Activated B cell treated with CpG ODN at 0.5 μM for 24 hours (primary cell): ENCODE measurements at regions of chr3 and their contacts with region 1.

Region 1: GRCh38 chr3:43690400-43691119 is at the start of gene ABHD5:
- DNase-seq: peak; percentile 92
- ATAC-seq: peak; percentile 82
- H3K4me3 Mint-ChIP-seq: peak within 1 kb of the TSS; percentile 88
- H3K27ac Mint-ChIP-seq: peak within 1 kb of the TSS; percentile 86
- H3K4me1 Mint-ChIP-seq: peaks cover 28% of the 10 kb centered on the region
- H3K27me3 Mint-ChIP-seq: no peaks in the 10 kb centered on the region
- CTCF ChIP-seq: no peak
- total RNA-seq, gene ABHD5: 6.0 and 8.0 TPM in 2 replicates

Region 2: DNA sequence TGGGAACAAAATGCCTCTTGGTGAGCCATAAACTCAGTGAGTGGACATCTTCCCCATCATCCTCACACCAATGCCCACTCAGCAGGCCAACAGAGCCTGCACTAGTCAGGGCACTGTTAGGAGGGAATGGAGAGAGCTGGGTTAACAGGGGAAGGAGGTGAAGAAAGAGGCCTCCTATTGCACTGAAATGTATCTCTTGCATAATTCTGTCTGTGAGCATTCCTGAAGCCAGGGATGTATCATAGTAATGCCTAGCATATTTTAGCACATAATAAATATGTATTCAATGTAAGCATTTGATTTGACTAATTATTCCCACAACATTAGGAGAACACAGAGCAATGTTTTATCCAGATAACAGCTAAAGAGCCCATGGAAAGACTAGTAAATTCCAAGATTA is 149.9 kb before region 1 on chr3:
- CTCF ChIA-PET with region 1: no interaction called
- POLR2A ChIA-PET with region 1: interaction called, 3 read pairs
- intact Hi-C with region 1: loop called (anchors 2 kb)
- DNase-seq: no peak
- ATAC-seq: no peak
- H3K4me3 Mint-ChIP-seq: no peak overlapping the region
- H3K27ac Mint-ChIP-seq: no peak overlapping the region
- H3K4me1 Mint-ChIP-seq: no peaks in the 10 kb centered on the region
- H3K27me3 Mint-ChIP-seq: no peaks in the 10 kb centered on the region
- CTCF ChIP-seq: no peak

Region 3: GRCh38 chr3:43606284-43606683 is 84.3 kb before region 1 on chr3:
- CTCF ChIA-PET with region 1: no interaction called
- POLR2A ChIA-PET with region 1: no interaction called
- intact Hi-C with region 1: no loop called
- DNase-seq: no peak
- ATAC-seq: no peak
- H3K4me3 Mint-ChIP-seq: no peak overlapping the region
- H3K27ac Mint-ChIP-seq: no peak overlapping the region
- H3K4me1 Mint-ChIP-seq: no peaks in the 10 kb centered on the region
- H3K27me3 Mint-ChIP-seq: no peaks in the 10 kb centered on the region
- CTCF ChIP-seq: no peak

Region 4: DNA sequence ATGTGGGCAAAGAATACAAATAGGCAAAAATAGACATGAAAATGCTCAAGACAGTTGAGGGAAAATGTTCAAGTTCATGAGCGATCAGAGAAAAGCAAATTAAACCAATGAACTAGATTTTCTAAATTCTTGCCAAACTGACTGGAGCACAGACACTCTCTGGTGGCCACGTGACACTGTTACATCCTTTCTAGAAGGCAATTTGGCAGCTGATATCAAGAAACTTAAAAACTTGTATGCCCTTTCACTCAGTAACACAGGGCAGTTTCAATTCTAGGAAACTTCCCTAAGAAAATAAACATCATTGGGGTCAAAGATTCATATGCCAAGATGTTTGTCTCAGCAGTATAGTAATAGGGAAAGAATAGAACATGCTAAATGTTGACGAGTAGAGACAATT is 52.4 kb after region 1 on chr3:
- CTCF ChIA-PET with region 1: no interaction called
- POLR2A ChIA-PET with region 1: no interaction called
- intact Hi-C with region 1: no loop called
- DNase-seq: no peak
- ATAC-seq: no peak
- H3K4me3 Mint-ChIP-seq: no peak overlapping the region
- H3K27ac Mint-ChIP-seq: no peak overlapping the region
- H3K4me1 Mint-ChIP-seq: no peaks in the 10 kb centered on the region
- H3K27me3 Mint-ChIP-seq: peaks cover 6% of the 10 kb centered on the region
- CTCF ChIP-seq: no peak

Region 5: GRCh38 chr3:43998836-43999727 is 308.5 kb after region 1 on chr3:
- CTCF ChIA-PET with region 1: no interaction called
- POLR2A ChIA-PET with region 1: interaction called, 3 read pairs
- intact Hi-C with region 1: loop called (anchors 2 kb)
- DNase-seq: peak; percentile 48
- ATAC-seq: peak; percentile 45
- H3K4me3 Mint-ChIP-seq: peak overlapping the region; percentile 89
- H3K27ac Mint-ChIP-seq: peak overlapping the region; percentile 66
- H3K4me1 Mint-ChIP-seq: peaks cover 46% of the 10 kb centered on the region
- H3K27me3 Mint-ChIP-seq: peaks cover 51% of the 10 kb centered on the region
- CTCF ChIP-seq: no peak

Region 6: DNA sequence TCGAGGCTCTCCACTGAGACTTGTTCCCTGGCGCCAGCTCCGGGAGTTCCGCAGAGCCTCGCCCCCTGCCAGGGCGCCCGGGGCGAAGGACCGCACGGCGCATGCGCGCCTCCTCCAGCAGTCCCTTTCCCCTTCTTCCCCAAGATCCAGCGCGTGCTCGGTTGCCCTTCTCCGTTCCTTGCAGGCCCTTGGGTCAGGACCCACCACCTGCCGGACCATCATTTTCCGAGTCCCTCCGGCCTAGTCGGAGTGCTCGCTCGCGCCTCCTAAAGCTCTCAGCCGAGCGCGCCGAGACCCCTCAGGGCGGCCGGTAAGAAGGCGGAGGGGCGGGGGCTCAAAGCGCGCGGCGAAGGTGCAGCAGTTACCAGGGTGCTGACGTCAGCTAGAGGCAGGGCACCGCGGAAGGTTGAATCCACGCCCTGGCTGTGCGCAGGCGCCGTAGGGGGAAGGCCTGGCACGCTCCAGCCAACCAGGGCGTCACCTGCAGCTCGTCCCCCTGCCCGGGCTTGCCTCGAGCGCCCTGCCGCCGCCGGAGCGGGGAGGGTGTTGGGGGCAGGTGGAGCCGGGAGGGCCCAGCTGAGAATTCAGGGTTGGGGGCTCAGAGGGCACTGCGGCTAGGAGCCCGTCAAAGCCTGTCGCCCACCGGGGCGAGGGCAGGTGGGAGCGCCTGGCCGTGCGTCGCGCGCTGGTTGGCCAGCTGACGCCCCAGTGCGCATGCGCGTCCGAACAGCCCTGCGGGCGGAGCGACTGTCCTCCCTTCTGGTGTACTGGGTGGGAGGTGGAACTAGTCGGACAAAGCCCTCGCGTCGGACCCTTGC is 647.7 kb after region 1 on chr3 and contains the start of gene TCAIM:
- CTCF ChIA-PET with region 1: no interaction called
- POLR2A ChIA-PET with region 1: no interaction called
- intact Hi-C with region 1: loop called (anchors 1 kb)
- DNase-seq: peak; percentile 98
- ATAC-seq: peak; percentile 91
- H3K4me3 Mint-ChIP-seq: peak within 1 kb of the TSS; percentile 96
- H3K27ac Mint-ChIP-seq: peak within 1 kb of the TSS; percentile 97
- H3K4me1 Mint-ChIP-seq: peaks cover 22% of the 10 kb centered on the region
- H3K27me3 Mint-ChIP-seq: no peaks in the 10 kb centered on the region
- CTCF ChIP-seq: no peak
- total RNA-seq, gene TCAIM: 11.8 and 12.9 TPM in 2 replicates

Region 7: DNA sequence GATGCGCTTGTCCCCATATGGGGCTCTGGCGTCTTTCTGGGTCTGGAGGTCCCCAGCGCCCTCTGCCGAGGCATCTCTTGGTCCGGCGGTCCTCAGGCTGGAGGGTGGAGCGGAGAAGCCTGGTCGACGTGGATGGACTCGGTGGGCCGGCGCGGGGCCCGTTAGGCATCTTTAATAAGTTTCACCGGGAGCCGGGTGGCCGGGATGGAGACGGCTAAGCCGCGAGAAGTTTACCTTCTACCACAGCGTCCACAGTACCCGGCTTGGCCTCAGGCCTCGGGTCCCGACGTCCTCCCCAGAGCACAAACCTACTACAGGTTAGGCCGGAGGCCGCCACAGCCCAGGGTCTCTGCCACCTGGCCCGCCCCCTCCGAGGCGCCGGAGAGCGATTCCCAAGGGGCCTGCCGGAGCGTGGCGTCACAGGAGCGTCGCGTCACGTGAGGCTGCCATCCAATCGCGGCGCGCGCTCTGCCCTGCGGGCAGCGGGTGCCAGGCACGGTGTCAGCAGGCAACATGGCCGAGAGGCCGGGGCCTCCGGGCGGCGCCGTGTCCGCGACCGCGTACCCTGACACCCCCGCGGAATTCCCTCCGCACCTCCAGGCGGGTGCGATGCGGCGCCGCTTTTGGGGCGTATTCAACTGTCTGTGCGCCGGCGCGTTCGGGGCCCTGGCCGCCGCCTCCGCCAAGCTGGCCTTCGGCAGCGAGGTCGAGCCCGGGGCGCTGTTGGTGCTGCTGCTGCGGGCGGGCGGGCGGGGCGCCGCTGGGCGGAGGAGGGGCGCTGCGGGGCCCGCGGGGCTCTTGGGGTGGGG is 1171.1 kb after region 1 on chr3 and contains the start of gene TMEM42:
- CTCF ChIA-PET with region 1: no interaction called
- POLR2A ChIA-PET with region 1: no interaction called
- intact Hi-C with region 1: loop called (anchors 10 kb)
- DNase-seq: peak; percentile 90
- ATAC-seq: peak; percentile 97
- H3K4me3 Mint-ChIP-seq: peak within 1 kb of the TSS; percentile 88
- H3K27ac Mint-ChIP-seq: peak within 1 kb of the TSS; percentile 85
- H3K4me1 Mint-ChIP-seq: peaks cover 17% of the 10 kb centered on the region
- H3K27me3 Mint-ChIP-seq: no peaks in the 10 kb centered on the region
- CTCF ChIP-seq: no peak
- total RNA-seq, gene TMEM42: 12.4 and 13.1 TPM in 2 replicates